GM18951 (cell line): ENCODE measurements at regions of chr1 and their contacts with region 1.

Region 1: GRCh38 chr1:70509996-70510876 is 99.2 kb downstream of the CTH start:
- POLR2A ChIP-seq: no peak

Region 2: DNA sequence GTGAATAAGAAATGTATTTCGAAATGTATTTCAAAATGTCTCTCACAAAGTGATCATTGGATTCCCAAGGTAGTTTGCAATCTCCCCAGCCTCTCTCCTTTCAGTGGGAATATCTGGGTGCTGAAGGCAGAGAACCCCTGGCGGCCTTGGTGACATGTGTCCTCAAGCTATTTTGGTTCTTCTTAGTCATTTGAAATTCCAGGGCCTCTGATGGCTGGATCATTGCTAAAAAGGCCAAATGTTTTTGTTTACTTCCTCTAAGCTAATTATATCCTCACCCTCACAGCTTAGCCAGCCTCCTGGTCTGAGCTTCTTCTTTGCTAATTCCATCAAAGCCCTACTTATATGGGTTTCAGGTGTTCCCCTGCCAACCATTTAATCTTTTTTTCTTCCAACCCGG is 376.1 kb before region 1 on chr1:
- in situ Hi-C with region 1: loop called (anchors 10 kb)
- POLR2A ChIP-seq: no peak

Region 3: DNA sequence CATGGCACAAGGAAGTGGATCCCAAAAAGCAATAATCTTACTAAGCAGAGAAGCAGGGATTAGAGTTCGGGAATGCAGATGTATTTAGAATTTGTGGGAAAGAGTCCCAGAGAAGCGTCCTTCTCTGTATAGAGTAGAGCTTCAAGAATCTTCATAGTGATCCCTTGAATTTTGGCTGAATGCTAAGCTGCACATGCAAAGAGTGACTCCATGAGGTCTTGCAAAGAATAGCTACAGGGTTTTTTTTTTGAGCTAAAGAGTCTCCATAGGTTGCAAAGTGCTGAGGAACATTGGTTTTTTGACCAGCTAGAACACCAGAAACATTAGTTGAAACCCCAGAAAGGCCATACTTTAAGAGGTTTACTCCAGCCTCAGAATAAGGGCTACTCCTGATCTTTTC is 107.5 kb after region 1 on chr1:
- in situ Hi-C with region 1: no loop called
- POLR2A ChIP-seq: no peak